ENCODE measurements at regions of chr6 and their contacts with region 1.

Region 1: DNA sequence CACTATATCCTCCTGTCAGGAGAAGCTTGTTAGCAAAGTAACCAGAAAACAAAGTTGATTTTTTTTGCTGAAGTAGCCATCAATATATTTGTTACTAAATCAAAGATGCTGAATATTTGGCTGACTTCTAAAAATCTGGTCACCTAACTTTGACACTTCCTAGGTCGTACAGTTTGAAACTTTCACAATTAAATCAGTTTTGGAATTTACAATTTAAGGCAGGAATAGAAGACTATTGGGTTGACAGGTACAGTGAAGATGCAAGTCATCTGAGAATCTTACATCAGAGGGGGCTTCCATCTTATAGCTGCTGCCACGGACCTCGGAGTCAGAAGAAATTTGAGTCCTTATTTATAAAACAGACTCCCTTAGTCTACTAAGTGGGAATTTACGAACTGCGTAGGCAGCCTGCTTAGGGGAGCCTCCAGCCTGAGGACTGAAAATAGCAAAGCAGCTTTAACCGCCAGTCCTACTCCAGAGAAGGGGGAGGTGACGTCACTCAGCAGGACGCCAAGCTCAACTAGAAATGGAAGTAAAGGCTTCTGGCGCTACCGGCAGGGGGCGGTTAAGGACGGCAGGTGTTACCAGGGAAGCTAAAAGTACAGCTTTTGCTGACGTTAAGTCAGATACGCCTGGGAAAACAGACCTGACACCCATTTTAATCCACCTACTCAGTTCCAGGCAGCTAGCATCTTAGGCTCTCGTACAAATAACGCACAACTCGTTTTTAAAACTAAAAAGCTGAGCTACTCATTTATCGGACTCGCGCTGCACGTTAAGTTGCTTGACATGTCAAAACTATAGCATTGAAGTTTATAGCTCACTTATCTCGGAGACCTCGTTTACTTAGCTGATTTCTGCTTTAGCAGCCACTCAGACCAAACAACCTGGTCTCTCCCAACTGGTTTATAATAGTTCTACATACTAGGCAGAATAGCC is 61.1 kb upstream of the HFE start:
- DNase-seq: peak; percentile 76
- ATAC-seq: peak; percentile 39
- H3K4me3 Mint-ChIP-seq: peak overlapping the region; percentile 96
- H3K27ac Mint-ChIP-seq: peak overlapping the region; percentile 99
- H3K4me1 Mint-ChIP-seq: peaks cover 35% of the 10 kb centered on the region
- H3K27me3 Mint-ChIP-seq: peaks cover 2% of the 10 kb centered on the region
- CTCF ChIP-seq: no peak

Region 2: DNA sequence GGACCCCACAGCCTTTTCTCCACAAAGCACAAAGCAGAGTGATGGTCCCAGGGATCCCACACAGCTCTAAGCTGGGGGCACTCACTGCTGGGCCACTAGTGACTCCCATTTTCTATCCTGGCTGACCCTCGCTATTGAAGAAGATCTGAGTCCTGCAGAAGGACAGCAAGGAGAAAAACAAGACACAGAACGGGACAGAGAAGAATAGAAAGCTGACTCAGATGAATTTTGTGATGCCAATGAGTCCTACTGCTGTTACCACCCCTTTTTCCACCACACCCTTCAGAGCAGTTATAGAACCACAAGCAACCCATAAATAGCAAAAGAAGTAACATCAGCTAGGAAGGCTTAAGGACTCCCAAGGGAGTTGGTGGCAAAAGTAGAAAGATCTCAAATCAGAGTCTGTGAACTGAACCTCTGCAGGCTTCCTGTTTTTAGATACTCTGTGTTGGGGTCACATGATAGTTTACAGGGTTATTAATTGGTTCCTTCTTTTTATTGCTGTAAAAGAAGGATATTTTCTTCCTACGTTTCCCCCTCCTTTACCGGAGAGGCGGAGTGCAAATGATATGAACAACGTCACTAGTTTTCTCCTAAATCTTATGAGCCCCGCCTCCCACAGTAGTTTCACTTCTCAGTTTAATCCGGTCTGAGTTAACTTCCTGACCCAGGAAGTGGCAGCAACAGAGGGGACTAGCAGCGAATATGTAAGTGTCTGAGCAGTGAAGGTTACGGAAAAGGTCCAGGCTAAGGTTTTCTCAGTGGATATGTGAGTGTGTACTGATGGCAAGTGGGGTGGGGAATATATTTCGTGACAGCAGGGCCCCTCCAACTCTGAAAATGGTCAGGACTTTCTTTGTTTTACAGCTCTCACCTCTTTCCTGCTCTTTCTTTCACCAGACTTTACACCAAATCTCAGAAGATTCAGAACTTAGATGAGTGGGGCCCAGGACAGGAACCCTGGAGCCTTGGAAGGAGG is 63.7 kb before region 1 on chr6 and contains the start of gene TRIM38:
- CTCF ChIA-PET with region 1: interaction called, 6 read pairs
- POLR2A ChIA-PET with region 1: interaction called, 43 read pairs
- intact Hi-C with region 1: loop called (anchors 1 kb)
- DNase-seq: peak; percentile 30
- ATAC-seq: peak; percentile 82
- H3K4me3 Mint-ChIP-seq: peak within 1 kb of the TSS; percentile 94
- H3K27ac Mint-ChIP-seq: peak within 1 kb of the TSS; percentile 95
- H3K4me1 Mint-ChIP-seq: peaks cover 87% of the 10 kb centered on the region
- H3K27me3 Mint-ChIP-seq: no peaks in the 10 kb centered on the region
- CTCF ChIP-seq: no peak
- total RNA-seq, gene TRIM38: 31.7 and 36.8 TPM in 2 replicates

Region 3: DNA sequence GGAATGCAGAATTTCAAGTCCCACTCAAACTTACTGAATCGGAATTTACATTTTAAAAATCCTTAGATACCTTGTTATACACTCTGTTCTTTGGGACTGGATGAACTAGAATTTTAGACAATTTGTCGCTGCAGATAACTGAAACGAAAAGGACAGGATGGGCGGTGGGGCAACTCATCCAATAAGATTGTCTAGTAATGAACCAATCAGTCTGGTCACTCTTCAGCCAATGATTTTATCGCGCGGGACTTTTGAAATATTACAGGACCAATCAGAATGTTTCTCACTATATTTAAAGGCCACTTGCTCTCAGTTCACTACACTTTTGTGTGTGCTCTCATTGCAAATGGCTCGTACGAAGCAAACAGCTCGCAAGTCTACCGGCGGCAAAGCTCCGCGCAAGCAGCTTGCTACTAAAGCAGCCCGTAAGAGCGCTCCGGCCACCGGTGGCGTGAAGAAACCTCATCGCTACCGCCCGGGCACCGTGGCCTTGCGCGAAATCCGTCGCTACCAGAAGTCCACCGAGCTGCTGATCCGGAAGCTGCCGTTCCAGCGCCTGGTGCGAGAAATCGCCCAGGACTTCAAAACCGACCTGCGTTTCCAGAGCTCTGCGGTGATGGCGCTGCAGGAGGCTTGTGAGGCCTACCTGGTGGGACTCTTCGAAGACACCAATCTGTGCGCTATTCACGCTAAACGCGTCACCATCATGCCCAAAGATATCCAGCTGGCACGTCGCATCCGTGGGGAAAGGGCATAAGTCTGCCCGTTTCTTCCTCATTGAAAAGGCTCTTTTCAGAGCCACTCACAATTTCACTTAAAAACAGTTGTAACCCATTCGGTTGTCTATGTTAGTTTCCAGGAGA is 19.1 kb after region 1 on chr6:
- CTCF ChIA-PET with region 1: interaction called, 25 read pairs
- POLR2A ChIA-PET with region 1: interaction called, 477 read pairs
- intact Hi-C with region 1: loop called (anchors 1 kb)
- DNase-seq: peak; percentile 51
- ATAC-seq: peak; percentile 58
- H3K4me3 Mint-ChIP-seq: peak overlapping the region; percentile 91
- H3K27ac Mint-ChIP-seq: peak overlapping the region; percentile 99
- H3K4me1 Mint-ChIP-seq: peaks cover 24% of the 10 kb centered on the region
- H3K27me3 Mint-ChIP-seq: no peaks in the 10 kb centered on the region
- CTCF ChIP-seq: no peak

Region 4: GRCh38 chr6:26103770-26104456 is 77.8 kb after region 1 on chr6:
- CTCF ChIA-PET with region 1: interaction called, 8 read pairs
- POLR2A ChIA-PET with region 1: interaction called, 43 read pairs
- intact Hi-C with region 1: loop called (anchors 1 kb)
- DNase-seq: peak; percentile 83
- ATAC-seq: peak; percentile 85
- H3K4me3 Mint-ChIP-seq: peak overlapping the region; percentile 85
- H3K27ac Mint-ChIP-seq: peak overlapping the region; percentile 98
- H3K4me1 Mint-ChIP-seq: peaks cover 12% of the 10 kb centered on the region
- H3K27me3 Mint-ChIP-seq: peaks cover 3% of the 10 kb centered on the region
- CTCF ChIP-seq: no peak

Region 5: DNA sequence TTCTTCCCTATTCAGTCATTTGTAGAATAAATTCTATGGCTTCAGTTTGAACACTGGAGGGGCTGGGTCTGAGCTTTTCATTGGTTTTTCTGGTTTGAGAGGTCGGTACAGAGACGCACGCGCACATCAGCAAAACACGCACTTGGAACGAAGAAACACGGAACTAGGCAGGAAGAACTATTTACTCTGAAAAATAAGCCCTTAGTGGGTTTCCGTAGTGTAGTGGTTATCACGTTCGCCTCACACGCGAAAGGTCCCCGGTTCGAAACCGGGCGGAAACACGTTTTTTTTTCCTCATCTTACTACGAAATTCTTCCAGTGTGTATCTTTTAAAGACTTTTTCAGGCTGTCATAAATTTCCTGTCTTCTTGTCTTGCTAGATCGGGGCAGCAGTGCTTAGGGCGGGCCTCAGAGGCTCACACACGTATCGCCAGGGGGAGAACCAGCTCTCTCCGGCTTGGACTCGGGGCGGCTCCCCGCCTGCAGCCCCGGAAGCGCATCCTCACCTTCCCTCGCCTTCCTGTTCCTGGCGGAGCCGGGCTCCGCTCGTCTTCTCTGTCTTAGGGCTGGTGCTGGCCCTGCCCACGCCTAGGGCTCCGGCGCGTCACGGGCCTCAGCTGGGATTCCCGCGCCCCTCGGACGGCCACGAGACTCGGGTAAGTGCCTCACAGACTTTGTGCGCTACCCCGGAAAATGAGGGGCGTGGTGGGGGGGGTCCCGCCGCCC is 511.8 kb after region 1 on chr6 and contains the start of gene HMGN4:
- CTCF ChIA-PET with region 1: no interaction called
- POLR2A ChIA-PET with region 1: no interaction called
- intact Hi-C with region 1: loop called (anchors 10 kb)
- DNase-seq: peak; percentile 73
- ATAC-seq: peak; percentile 67
- H3K4me3 Mint-ChIP-seq: peak within 1 kb of the TSS; percentile 98
- H3K27ac Mint-ChIP-seq: peak within 1 kb of the TSS; percentile 97
- H3K4me1 Mint-ChIP-seq: peaks cover 65% of the 10 kb centered on the region
- H3K27me3 Mint-ChIP-seq: peaks cover 7% of the 10 kb centered on the region
- CTCF ChIP-seq: no peak
- total RNA-seq, gene HMGN4: 74.5 and 82.2 TPM in 2 replicates

Region 6: GRCh38 chr6:27809939-27810767 is 1784.0 kb after region 1 on chr6:
- CTCF ChIA-PET with region 1: interaction called, 3 read pairs
- POLR2A ChIA-PET with region 1: interaction called, 32 read pairs
- intact Hi-C with region 1: loop called (anchors 5 kb)
- DNase-seq: peak; percentile 68
- ATAC-seq: peak; percentile 59
- H3K4me3 Mint-ChIP-seq: peak overlapping the region; percentile 93
- H3K27ac Mint-ChIP-seq: peak overlapping the region; percentile 97
- H3K4me1 Mint-ChIP-seq: peaks cover 59% of the 10 kb centered on the region
- H3K27me3 Mint-ChIP-seq: no peaks in the 10 kb centered on the region
- CTCF ChIP-seq: no peak

Measured in activated B cell treated with CpG ODN at 0.5 μM for 24 hours (primary cell).